ENCODE measurements at regions of chr19 and their contacts with region 1.

Region 1: DNA sequence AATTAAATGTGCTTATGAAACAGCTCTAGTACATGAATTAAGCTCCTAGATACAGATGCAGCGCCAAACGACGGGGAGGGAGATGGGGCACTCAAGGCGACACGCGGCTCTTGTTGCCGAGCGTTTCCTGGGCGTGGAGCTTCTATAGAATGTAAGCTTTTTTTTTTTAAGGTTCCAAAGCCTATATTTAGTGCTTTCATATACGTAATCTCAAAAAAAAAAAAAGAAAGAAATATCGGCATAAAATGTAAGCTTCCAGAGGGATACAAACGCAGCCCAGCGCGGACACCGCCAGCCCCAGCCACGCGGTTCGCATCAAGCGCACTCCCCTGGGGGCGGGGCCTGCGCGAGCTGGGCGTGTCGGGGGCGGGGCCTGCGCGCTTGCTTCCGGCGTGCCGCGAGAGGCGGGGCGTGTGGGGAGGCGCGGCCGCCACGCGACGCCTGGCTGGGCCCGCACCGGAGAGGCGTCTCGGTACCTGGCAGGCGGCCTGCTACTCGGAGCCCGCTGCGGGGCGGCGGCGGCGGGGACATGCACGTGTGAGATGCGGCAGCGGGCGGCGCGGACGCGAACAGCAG is at the start of gene URI1:
- DNase-seq: peak; percentile 94
- H3K4me3 ChIP-seq: peak within 1 kb of the TSS; percentile 74 to 93 (median 88)
- H3K27ac ChIP-seq: peak within 1 kb of the TSS; percentile 80 to 84 (median 82)
- H3K4me1 ChIP-seq: peaks cover 0 to 44% (median 35%) of the 10 kb centered on the region in 4 donors
- H3K27me3 ChIP-seq: no peaks in the 10 kb centered on the region
- CTCF ChIP-seq: no peak
- EP300 ChIP-seq: no peak
- POLR2A ChIP-seq: no peak
- total RNA-seq, gene URI1: 54.6 to 69.2 (median 60.6) TPM

Region 2: GRCh38 chr19:29811125-29812079 is 130.5 kb before region 1 on chr19 and contains the start of gene CCNE1:
- intact Hi-C with region 1: loop called (anchors 2 kb)
- DNase-seq: peak; percentile 96
- H3K4me3 ChIP-seq: peak within 1 kb of the TSS; percentile 38 to 75 (median 60)
- H3K27ac ChIP-seq: peak within 1 kb of the TSS; percentile 55 to 73 (median 68)
- H3K4me1 ChIP-seq: peaks cover 0 to 15% (median 10%) of the 10 kb centered on the region in 4 donors
- H3K27me3 ChIP-seq: no peaks in the 10 kb centered on the region
- CTCF ChIP-seq: no peak
- EP300 ChIP-seq: no peak
- POLR2A ChIP-seq: no peak
- total RNA-seq, gene CCNE1: 2.3 to 13.8 (median 3.6) TPM

Region 3: GRCh38 chr19:29978080-29978479 is 36.2 kb after region 1 on chr19:
- intact Hi-C with region 1: no loop called
- DNase-seq: no peak
- H3K4me3 ChIP-seq: no peak overlapping the region
- H3K27ac ChIP-seq: no peak overlapping the region
- H3K4me1 ChIP-seq: peaks cover 0 to 17% (median 6%) of the 10 kb centered on the region in 4 donors
- H3K27me3 ChIP-seq: no peaks in the 10 kb centered on the region
- CTCF ChIP-seq: no peak
- EP300 ChIP-seq: no peak
- POLR2A ChIP-seq: no peak

Measured in sigmoid colon (tissue), 7 donors.